ENCODE measurements at regions of chr16 and their contacts with region 1.

Region 1: DNA sequence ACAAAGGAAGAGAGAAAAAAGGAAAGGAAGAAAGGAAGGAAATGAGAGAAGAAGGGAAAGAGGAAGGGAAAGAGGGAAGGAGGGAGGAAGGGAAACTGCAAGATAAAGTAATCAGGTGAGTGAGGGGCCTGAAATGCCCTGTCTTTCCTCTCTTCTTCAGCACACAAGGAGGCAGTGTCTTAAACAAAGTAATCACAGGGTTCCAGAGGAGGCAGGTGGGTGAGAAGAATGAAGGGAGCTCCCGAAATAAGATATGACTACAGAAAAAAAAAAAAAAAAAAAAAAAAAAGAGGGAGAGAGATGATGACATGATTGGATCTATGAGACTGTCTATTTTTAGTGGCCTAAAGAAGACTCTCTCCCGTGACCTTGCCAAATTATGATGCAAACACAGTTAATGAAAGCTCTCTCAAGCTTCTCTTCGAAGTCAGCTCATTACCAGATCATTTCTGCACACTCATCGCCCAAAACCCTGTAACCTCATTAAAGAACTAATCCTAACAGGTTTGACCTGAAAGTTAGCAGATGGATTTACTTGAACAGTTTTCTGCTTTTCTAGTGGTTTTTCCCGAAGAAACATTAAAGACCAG is 53.6 kb downstream of the CDH11 start:
- DNase-seq: no peak
- ATAC-seq: no peak
- H3K4me3 ChIP-seq: no peak overlapping the region
- H3K27ac ChIP-seq: no peak overlapping the region
- H3K4me1 ChIP-seq: peaks cover 10% of the 10 kb centered on the region
- H3K27me3 ChIP-seq: no peaks in the 10 kb centered on the region

Region 2: GRCh38 chr16:65117811-65118448 is 49.7 kb after region 1 on chr16:
- intact Hi-C with region 1: no loop called
- DNase-seq: peak; percentile 59 to 80 (median 71)
- ATAC-seq: peak; percentile 44 to 46
- H3K4me3 ChIP-seq: no peak overlapping the region
- H3K27ac ChIP-seq: no peak overlapping the region
- H3K4me1 ChIP-seq: no peaks in the 10 kb centered on the region
- H3K27me3 ChIP-seq: no peaks in the 10 kb centered on the region

Region 3: GRCh38 chr16:65172356-65172755 is 104.1 kb after region 1 on chr16:
- intact Hi-C with region 1: loop called in 1 of 4 experiments (anchors 5 kb)
- DNase-seq: no peak
- ATAC-seq: no peak
- H3K4me3 ChIP-seq: no peak overlapping the region
- H3K27ac ChIP-seq: no peak overlapping the region
- H3K4me1 ChIP-seq: no peaks in the 10 kb centered on the region
- H3K27me3 ChIP-seq: no peaks in the 10 kb centered on the region

Measured in right cardiac atrium (tissue), 5 donors.